ENCODE measurements at regions of chr17 and their contacts with region 1.

Region 1: DNA sequence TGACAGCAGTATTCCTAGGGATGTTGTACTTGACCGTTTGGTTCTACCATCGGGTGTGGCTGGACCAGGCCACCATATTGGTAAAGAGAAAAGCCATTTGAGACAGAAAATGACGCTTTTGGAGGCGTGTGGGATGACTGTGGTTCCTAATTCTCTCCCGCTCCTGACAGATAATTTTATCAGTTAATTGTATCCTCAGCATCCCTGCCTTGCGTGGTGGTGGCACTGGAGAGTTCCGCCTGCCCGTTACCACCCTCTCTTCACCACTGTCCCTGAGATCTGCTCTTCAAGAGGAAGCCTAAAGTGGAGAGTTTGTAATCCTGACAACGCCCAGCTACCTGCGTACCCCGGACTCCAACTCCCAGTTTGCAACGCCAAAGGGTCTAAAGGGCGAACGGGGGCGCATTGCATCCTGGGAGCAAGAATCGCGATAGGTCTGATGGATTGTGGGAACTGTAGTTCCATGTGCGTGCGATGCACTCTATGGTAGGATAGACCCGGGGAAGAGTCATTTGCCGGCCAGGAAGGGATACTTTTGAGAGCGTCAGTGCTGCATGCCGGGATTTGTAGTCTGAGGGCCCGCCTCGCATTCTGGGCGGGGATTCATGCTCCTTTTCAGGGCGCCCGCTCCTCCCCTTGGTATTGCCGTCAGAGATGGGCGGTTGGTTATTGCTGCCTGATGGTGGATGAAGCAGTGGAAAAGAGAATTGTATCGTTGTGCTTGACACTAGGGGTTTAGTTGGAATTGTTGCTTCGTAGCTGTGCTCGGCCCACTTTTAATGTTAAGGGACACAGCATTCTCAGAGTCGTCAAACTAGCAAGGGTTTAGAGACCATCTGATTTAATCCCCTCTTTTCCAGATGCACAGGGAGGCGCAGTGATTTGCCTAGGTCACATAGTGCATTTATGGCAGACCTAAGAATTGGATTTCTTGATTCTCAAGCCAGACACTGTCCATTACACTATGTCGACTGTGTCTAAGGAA is 965 bp upstream of the PHF12 start:
- DNase-seq: peak; percentile 98
- ATAC-seq: peak; percentile 73
- H3K4me3 Mint-ChIP-seq: no peak overlapping the region
- H3K27ac Mint-ChIP-seq: no peak overlapping the region
- H3K4me1 Mint-ChIP-seq: peaks cover 16% of the 10 kb centered on the region
- H3K27me3 Mint-ChIP-seq: no peaks in the 10 kb centered on the region

Region 2: DNA sequence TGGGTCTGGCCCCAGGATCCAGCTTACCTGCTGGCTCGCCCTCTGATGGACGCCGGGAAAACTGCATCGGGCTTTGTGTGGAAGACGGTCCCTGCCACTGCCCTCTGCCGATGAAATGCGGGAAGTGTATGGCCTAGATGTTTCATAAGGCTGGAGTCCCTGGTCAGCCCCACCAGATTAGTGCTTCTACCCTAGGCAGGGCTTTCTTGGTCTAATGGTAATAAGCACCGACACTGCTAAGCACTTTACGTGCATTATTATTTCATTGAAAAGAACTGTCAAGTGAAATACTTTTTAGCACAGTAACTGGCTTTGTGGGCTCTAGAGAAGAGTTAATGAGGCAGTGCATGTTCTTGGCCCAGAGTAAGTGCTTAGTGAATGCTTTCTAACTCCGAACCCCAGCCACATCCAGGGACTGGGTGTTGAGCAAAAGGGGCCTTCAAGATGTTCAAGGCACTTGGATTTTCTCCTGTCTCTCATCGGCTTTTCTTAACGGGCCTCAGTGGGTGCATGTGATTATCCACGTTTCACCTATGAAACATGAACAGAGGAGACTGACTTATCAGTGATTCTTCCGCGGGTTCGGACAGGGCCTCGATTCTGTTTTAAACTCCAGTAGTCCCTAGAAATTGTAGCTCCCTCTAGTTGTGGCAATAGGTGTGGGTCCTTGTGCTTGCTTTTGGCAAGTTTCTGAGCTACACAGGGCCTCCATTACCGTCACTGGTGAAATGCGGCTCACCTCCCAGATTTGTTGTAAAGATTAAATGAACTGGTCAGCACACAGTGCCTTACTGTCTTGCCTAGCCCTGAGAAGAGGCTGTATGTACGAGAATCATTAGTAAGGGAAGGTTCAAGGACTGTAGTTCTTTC is 201.9 kb before region 1 on chr17:
- CTCF ChIA-PET with region 1: interaction called, 11 read pairs
- DNase-seq: peak; percentile 93
- ATAC-seq: peak; percentile 88
- H3K4me3 Mint-ChIP-seq: no peak overlapping the region
- H3K27ac Mint-ChIP-seq: no peak overlapping the region
- H3K4me1 Mint-ChIP-seq: peaks cover 34% of the 10 kb centered on the region
- H3K27me3 Mint-ChIP-seq: no peaks in the 10 kb centered on the region

Region 3: GRCh38 chr17:28902819-28903545 is 49.3 kb before region 1 on chr17 and contains the start of gene DHRS13:
- CTCF ChIA-PET with region 1: interaction called, 18 read pairs
- DNase-seq: peak; percentile 94
- ATAC-seq: peak; percentile 97
- H3K4me3 Mint-ChIP-seq: peak within 1 kb of the TSS; percentile 89
- H3K27ac Mint-ChIP-seq: peak within 1 kb of the TSS; percentile 84
- H3K4me1 Mint-ChIP-seq: peaks cover 43% of the 10 kb centered on the region
- H3K27me3 Mint-ChIP-seq: no peaks in the 10 kb centered on the region
- total RNA-seq, gene DHRS13: 23.1 to 25.9 TPM

Region 4: DNA sequence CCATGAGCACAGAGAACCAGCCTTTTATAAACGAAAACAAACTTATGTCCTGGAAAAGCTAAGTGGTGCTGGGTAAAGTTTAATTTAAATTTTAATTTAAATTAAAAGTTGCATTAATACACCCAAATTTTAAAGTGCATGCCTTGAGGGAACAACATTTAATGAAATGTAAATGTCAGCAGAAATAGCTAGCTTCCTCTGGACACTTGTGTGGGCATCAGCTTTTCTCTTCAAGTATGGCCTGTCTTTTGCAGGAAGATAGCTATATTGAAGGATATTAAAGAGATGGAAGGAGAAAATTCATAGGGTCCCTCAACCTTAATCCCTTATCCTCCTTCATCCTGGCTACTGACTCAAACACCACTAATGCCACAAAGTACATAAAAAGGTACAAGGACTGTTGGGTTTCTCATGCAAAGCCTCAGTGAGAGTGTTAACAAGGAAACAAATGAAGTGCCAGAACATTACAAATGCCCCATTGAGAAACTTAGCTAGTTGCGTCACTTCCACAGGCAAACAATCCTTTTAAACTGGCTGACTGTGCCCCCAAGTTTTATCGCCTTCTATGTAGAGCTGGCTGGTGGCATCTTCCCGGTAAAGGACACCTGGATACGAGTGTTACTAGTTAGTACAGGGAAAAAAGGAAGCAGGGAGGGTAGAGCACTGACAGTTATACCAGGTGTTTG is 15.1 kb before region 1 on chr17:
- CTCF ChIA-PET with region 1: interaction called, 12 read pairs
- DNase-seq: no peak
- ATAC-seq: no peak
- H3K4me3 Mint-ChIP-seq: no peak overlapping the region
- H3K27ac Mint-ChIP-seq: no peak overlapping the region
- H3K4me1 Mint-ChIP-seq: peaks cover 56% of the 10 kb centered on the region
- H3K27me3 Mint-ChIP-seq: no peaks in the 10 kb centered on the region

Region 5: DNA sequence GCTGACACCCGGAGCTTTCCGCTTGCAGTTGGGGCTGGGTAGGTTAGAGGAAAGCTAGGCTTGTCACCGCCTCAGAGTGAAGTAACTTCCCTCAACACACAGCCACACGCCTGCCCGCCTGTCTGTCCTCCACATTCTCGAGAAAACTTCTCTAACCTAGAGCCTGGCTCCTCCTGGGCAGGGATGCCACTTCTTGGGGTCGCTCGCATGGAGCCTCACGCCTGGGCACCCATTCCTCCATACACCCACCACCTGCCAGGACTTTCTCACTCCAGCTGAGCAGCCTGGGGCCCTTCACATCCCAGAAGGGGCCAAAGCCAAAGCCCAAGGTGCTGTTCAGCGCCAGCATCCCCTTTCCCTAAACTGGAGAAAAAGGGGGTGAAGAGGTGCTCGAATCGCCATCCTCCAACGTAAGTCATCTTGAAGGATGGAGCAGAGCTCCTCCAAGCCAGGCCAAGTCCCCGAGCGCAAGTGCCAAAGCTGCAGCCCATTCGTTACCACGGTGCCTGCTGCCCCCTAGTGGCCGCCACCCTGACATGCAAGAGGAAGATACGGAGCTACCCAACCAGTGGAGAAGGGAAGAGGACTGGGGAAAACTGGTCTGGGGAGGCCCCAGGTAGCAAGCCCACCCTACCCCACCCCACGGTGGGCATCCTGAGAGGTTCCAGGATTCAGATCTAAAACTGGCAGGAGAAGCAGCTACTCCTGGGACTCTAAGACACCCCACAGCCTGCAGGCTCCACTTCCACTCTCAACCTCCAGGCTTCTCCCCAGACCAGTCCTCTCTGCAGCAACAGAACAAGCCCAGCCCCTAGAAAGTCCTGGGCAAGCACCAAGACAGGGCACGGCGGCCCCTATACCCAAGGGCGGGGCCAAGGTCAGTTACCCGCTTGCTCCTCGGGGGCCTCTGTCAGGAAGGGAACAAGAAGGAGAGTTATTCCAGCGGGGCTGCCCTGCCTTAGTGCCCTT is 164.8 kb after region 1 on chr17:
- CTCF ChIA-PET with region 1: interaction called, 76 read pairs
- DNase-seq: peak; percentile 84
- ATAC-seq: peak; percentile 80
- H3K4me3 Mint-ChIP-seq: no peak overlapping the region
- H3K27ac Mint-ChIP-seq: no peak overlapping the region
- H3K4me1 Mint-ChIP-seq: peaks cover 11% of the 10 kb centered on the region
- H3K27me3 Mint-ChIP-seq: no peaks in the 10 kb centered on the region

Measured in activated CD8-positive, alpha-beta memory T cell treated with anti-CD3 and anti-CD28 coated beads, Interleukin-2, amount 10 ng/mL, durations not matched to agents 7 days and 5 days (primary cell).